ENCODE measurements at regions of chr11 and their contacts with region 1.

Region 1: GRCh38 chr11:72471005-72471898 is 36.9 kb upstream of the CLPB start:
- DNase-seq: peak; percentile 46 to 66 (median 61)
- H3K4me3 ChIP-seq: no peak overlapping the region
- H3K4me3 Mint-ChIP-seq: peak overlapping the region in 3 of 8 donors; percentile 57 to 68 (median 65)
- H3K27ac ChIP-seq: no peak overlapping the region
- H3K27ac Mint-ChIP-seq: no peak overlapping the region
- H3K4me1 ChIP-seq: no peaks in the 10 kb centered on the region
- H3K4me1 Mint-ChIP-seq: peaks cover 2 to 4% (median 3%) of the 10 kb centered on the region in 4 donors
- H3K27me3 ChIP-seq: no peaks in the 10 kb centered on the region
- H3K27me3 Mint-ChIP-seq: peaks cover 13 to 24% of the 10 kb centered on the region in 2 donors

Region 2: GRCh38 chr11:72222907-72223614 is 248.2 kb before region 1 on chr11:
- CTCF ChIA-PET with region 1: no interaction called
- POLR2A ChIA-PET with region 1: no interaction called
- intact Hi-C with region 1: no loop called
- DNase-seq: peak; percentile 91 to 95 (median 92)
- H3K4me3 ChIP-seq: peak overlapping the region; percentile 48 to 83
- H3K4me3 Mint-ChIP-seq: peak overlapping the region; percentile 89 to 96 (median 91)
- H3K27ac ChIP-seq: peak overlapping the region; percentile 72
- H3K27ac Mint-ChIP-seq: peak overlapping the region; percentile 89 to 96 (median 95)
- H3K4me1 ChIP-seq: peaks cover 19% of the 10 kb centered on the region
- H3K4me1 Mint-ChIP-seq: peaks cover 8 to 31% (median 19%) of the 10 kb centered on the region in 4 donors
- H3K27me3 ChIP-seq: no peaks in the 10 kb centered on the region
- H3K27me3 Mint-ChIP-seq: peaks cover 0 to 7% of the 10 kb centered on the region in 2 donors

Region 3: GRCh38 chr11:72483412-72484186 is 12.3 kb after region 1 on chr11:
- CTCF ChIA-PET with region 1: interaction called, 10 read pairs
- POLR2A ChIA-PET with region 1: no interaction called
- intact Hi-C with region 1: no loop called
- DNase-seq: peak in 1 of 5 donors; percentile 10
- H3K4me3 ChIP-seq: no peak overlapping the region
- H3K4me3 Mint-ChIP-seq: no peak overlapping the region
- H3K27ac ChIP-seq: no peak overlapping the region
- H3K27ac Mint-ChIP-seq: peak overlapping the region in 3 of 7 donors; percentile 8 to 73 (median 62)
- H3K4me1 ChIP-seq: peaks cover 5% of the 10 kb centered on the region
- H3K4me1 Mint-ChIP-seq: peaks cover 8 to 14% (median 11%) of the 10 kb centered on the region in 4 donors
- H3K27me3 ChIP-seq: no peaks in the 10 kb centered on the region
- H3K27me3 Mint-ChIP-seq: peaks cover 2 to 3% of the 10 kb centered on the region in 2 donors

Region 4: GRCh38 chr11:72553706-72554105 is 82.5 kb after region 1 on chr11:
- CTCF ChIA-PET with region 1: interaction called, 37 read pairs
- POLR2A ChIA-PET with region 1: no interaction called
- intact Hi-C with region 1: loop called (anchors 1 kb)
- DNase-seq: peak in 4 of 5 donors; percentile 17 to 32 (median 24)
- H3K4me3 ChIP-seq: no peak overlapping the region
- H3K4me3 Mint-ChIP-seq: no peak overlapping the region
- H3K27ac ChIP-seq: no peak overlapping the region
- H3K27ac Mint-ChIP-seq: no peak overlapping the region
- H3K4me1 ChIP-seq: no peaks in the 10 kb centered on the region
- H3K4me1 Mint-ChIP-seq: peaks cover 6 to 16% (median 12%) of the 10 kb centered on the region in 4 donors
- H3K27me3 ChIP-seq: no peaks in the 10 kb centered on the region
- H3K27me3 Mint-ChIP-seq: peaks cover 5 to 8% of the 10 kb centered on the region in 2 donors

Region 5: GRCh38 chr11:72585762-72586311 is 114.6 kb after region 1 on chr11:
- CTCF ChIA-PET with region 1: interaction called, 19 read pairs
- POLR2A ChIA-PET with region 1: no interaction called
- intact Hi-C with region 1: loop called (anchors 5 kb)
- DNase-seq: peak; percentile 66 to 77 (median 71)
- H3K4me3 ChIP-seq: peak overlapping the region; percentile 47 to 50
- H3K4me3 Mint-ChIP-seq: peak overlapping the region; percentile 79 to 97 (median 92)
- H3K27ac ChIP-seq: no peak overlapping the region
- H3K27ac Mint-ChIP-seq: peak overlapping the region in 6 of 7 donors; percentile 33 to 97 (median 70)
- H3K4me1 ChIP-seq: peaks cover 34% of the 10 kb centered on the region
- H3K4me1 Mint-ChIP-seq: peaks cover 14 to 52% (median 28%) of the 10 kb centered on the region in 4 donors
- H3K27me3 ChIP-seq: peaks cover 11% of the 10 kb centered on the region
- H3K27me3 Mint-ChIP-seq: peaks cover 17 to 37% of the 10 kb centered on the region in 2 donors

Region 6: GRCh38 chr11:72683782-72684200 is 212.5 kb after region 1 on chr11:
- CTCF ChIA-PET with region 1: interaction called, 11 read pairs
- POLR2A ChIA-PET with region 1: no interaction called
- intact Hi-C with region 1: loop called (anchors 1 kb)
- DNase-seq: peak; percentile 43 to 58 (median 53)
- H3K4me3 ChIP-seq: no peak overlapping the region
- H3K4me3 Mint-ChIP-seq: no peak overlapping the region
- H3K27ac ChIP-seq: no peak overlapping the region
- H3K27ac Mint-ChIP-seq: peak overlapping the region in 2 of 7 donors; percentile 13 to 57
- H3K4me1 ChIP-seq: no peaks in the 10 kb centered on the region
- H3K4me1 Mint-ChIP-seq: peaks cover 11 to 23% (median 15%) of the 10 kb centered on the region in 4 donors
- H3K27me3 ChIP-seq: no peaks in the 10 kb centered on the region
- H3K27me3 Mint-ChIP-seq: no peaks in the 10 kb centered on the region

Measured in CD4-positive, alpha-beta memory T cell (primary cell).